Breast epithelium (tissue), 4 donors: ENCODE measurements at regions of chr10 and their contacts with region 1.

Region 1: GRCh38 chr10:30392564-30392990 is 41.4 kb upstream of the MAP3K8 start:
- DNase-seq: peak; percentile 35 to 77
- H3K4me3 ChIP-seq: peak overlapping the region in 1 of 3 donors; percentile 49
- H3K27ac ChIP-seq: no peak overlapping the region
- H3K4me1 ChIP-seq: no peaks in the 10 kb centered on the region
- H3K27me3 ChIP-seq: no peaks in the 10 kb centered on the region
- CTCF ChIP-seq: peak; percentile 67 to 83 (median 82)
- POLR2A ChIP-seq: no peak

Region 2: DNA sequence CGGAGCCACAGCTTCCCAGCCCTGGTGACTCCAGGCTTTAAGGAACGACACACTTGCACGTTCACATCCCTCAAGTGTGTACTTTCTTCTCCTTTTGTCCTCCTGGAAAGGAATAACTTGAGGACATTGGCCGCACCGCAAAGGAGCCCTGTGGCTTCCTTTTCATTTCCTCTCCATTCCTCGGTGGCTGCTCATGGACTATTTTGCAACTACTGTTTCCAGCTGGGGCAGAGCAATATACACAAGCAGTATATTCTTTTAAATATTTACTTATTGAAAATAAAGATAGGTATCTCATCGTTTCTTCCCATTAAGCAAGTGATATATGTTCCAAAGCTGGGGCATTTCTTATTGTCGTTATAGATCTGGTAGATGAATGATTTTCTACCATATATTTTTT is 1200.9 kb before region 1 on chr10:
- intact Hi-C with region 1: loop called (anchors 10 kb)
- DNase-seq: no peak
- H3K4me3 ChIP-seq: no peak overlapping the region
- H3K27ac ChIP-seq: no peak overlapping the region
- H3K4me1 ChIP-seq: no peaks in the 10 kb centered on the region
- H3K27me3 ChIP-seq: no peaks in the 10 kb centered on the region
- CTCF ChIP-seq: no peak
- POLR2A ChIP-seq: no peak